ENCODE measurements at regions of chr15 and their contacts with region 1.

Region 1: DNA sequence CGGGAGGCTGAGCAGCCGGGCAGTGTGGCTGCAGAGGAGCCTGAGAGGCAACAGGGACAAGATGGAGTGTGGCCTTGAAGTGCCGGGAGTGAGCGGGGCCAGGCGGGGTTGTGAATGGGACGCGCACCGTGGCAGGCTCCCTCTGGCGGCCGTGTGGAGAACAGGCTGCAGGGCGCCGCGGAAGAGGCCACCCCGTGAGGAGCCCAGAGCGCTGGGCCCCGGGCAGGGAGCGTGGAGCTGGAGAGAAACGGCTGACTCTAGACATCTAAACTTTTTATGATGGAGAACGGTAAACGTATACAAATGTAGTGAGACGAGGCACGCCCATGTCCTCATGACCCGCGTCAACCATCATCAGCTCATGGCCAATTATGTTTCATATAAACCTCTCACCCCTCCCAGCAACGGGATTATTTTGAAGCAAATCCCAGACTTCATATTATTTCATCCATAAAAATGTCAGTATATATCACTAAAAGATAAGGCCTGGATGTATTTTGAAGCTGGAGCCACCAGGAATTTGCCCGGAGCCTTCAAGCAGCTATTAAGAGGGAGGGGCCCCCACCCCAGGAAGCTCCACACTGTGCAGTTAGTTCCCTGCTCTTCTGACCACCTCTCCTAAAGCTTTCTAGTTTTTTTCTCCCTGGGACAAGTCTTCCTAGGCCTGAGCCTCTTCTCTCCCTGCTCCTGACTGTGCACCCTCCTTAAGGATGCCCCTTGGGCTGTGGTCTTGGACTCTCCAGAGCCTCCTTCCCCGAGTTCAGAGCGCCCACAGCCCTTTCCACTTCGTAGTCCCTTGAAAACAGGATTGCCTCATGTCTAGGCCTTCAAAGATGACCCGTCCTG is 149.4 kb downstream of the SMAD6 start:
- DNase-seq: peak; percentile 86
- ATAC-seq: peak; percentile 86
- H3K4me3 Mint-ChIP-seq: no peak overlapping the region
- H3K27ac Mint-ChIP-seq: no peak overlapping the region
- H3K4me1 Mint-ChIP-seq: peaks cover 20% of the 10 kb centered on the region
- H3K27me3 Mint-ChIP-seq: peaks cover 16% of the 10 kb centered on the region
- CTCF ChIP-seq: peak; percentile 93

Region 2: GRCh38 chr15:66588537-66588936 is 262.9 kb before region 1 on chr15:
- CTCF ChIA-PET with region 1: interaction called, 15 read pairs
- POLR2A ChIA-PET with region 1: no interaction called
- DNase-seq: peak; percentile 80
- ATAC-seq: peak; percentile 91
- H3K4me3 Mint-ChIP-seq: peak overlapping the region; percentile 63
- H3K27ac Mint-ChIP-seq: no peak overlapping the region
- H3K4me1 Mint-ChIP-seq: peaks cover 23% of the 10 kb centered on the region
- H3K27me3 Mint-ChIP-seq: no peaks in the 10 kb centered on the region; the same call in 1 of the 2 replicates
- CTCF ChIP-seq: peak; percentile 69

Region 3: GRCh38 chr15:66679657-66680108 is 171.8 kb before region 1 on chr15:
- CTCF ChIA-PET with region 1: interaction called, 10 read pairs
- POLR2A ChIA-PET with region 1: no interaction called
- DNase-seq: peak; percentile 46
- ATAC-seq: peak; percentile 88
- H3K4me3 Mint-ChIP-seq: no peak overlapping the region
- H3K27ac Mint-ChIP-seq: peak overlapping the region; percentile 11; the same call in 1 of the 2 replicates
- H3K4me1 Mint-ChIP-seq: peaks cover 15% of the 10 kb centered on the region
- H3K27me3 Mint-ChIP-seq: no peaks in the 10 kb centered on the region
- CTCF ChIP-seq: no peak

Region 4: GRCh38 chr15:66747886-66748707 is 103.4 kb before region 1 on chr15:
- CTCF ChIA-PET with region 1: interaction called, 13 read pairs
- POLR2A ChIA-PET with region 1: interaction called, 6 read pairs
- DNase-seq: no peak
- ATAC-seq: no peak; the same call in 1 of the 2 replicates
- H3K4me3 Mint-ChIP-seq: peak overlapping the region; percentile 3; the same call in 1 of the 2 replicates
- H3K27ac Mint-ChIP-seq: peak overlapping the region; percentile 68
- H3K4me1 Mint-ChIP-seq: peaks cover 85% of the 10 kb centered on the region
- H3K27me3 Mint-ChIP-seq: no peaks in the 10 kb centered on the region
- CTCF ChIP-seq: no peak

Region 5: GRCh38 chr15:66789029-66790025 is 62.1 kb before region 1 on chr15:
- CTCF ChIA-PET with region 1: interaction called, 92 read pairs
- POLR2A ChIA-PET with region 1: no interaction called
- DNase-seq: peak; percentile 66
- ATAC-seq: peak; percentile 92
- H3K4me3 Mint-ChIP-seq: no peak overlapping the region
- H3K27ac Mint-ChIP-seq: no peak overlapping the region
- H3K4me1 Mint-ChIP-seq: peaks cover 8% of the 10 kb centered on the region; the same call in 1 of the 2 replicates
- H3K27me3 Mint-ChIP-seq: no peaks in the 10 kb centered on the region
- CTCF ChIP-seq: no peak

Region 6: DNA sequence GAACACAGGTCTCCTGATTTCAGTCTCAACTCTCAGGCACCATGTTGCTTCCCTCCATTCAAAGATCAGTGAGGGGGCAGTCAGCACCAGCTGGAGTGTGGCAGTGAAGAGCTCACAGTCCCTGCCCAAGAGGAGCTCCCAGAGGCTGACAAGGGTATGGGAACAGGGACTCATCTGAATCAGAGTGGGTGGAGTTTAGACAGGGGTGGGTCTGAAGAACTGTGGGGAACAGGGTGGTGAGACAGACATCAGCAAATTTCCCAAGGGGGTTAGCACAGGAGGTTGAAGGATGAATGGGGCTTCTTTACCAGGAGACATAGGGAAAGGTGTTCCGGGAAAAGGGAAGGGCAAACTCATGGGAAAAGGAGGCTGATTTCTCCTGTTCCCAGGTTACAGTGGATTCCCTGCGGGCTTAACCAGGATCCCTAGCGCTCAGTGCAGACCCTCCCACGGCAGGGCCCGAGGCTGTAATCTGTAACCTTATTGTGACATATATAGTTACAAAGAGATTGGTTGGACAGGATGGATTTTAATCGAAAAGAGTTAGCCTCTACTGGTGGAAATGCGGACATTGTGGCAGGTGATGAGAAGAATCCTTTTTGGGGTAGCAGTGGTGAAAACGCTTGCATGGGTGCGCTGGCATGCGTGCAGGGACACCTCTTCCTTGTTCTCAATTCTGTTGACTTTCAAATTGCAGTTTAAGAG is 10.8 kb after region 1 on chr15:
- CTCF ChIA-PET with region 1: interaction called, 14 read pairs
- POLR2A ChIA-PET with region 1: no interaction called
- DNase-seq: no peak
- ATAC-seq: peak; percentile 62
- H3K4me3 Mint-ChIP-seq: no peak overlapping the region
- H3K27ac Mint-ChIP-seq: peak overlapping the region; percentile 78; the same call in 1 of the 2 replicates
- H3K4me1 Mint-ChIP-seq: peaks cover 13% of the 10 kb centered on the region
- H3K27me3 Mint-ChIP-seq: no peaks in the 10 kb centered on the region
- CTCF ChIP-seq: no peak

Region 7: DNA sequence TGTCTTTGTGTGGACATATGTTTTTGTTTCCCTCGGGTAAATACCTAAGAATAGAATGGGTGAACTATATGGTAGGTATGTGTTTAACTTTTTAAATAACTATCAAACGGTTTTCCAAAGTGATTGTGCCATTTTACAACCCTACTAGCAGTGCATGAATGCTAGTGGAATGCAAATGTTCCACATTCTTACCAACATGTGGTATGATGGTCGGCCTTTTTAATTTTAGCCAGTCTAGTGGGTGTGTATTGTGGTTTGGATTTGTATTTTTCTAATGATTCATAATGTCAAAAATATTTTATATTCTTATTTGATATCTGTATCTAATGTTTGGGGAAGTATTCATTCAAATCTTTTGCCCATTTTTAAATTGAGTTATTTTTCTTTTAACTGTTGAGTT is 145.8 kb after region 1 on chr15:
- CTCF ChIA-PET with region 1: no interaction called
- POLR2A ChIA-PET with region 1: no interaction called
- DNase-seq: no peak
- ATAC-seq: no peak
- H3K4me3 Mint-ChIP-seq: no peak overlapping the region
- H3K27ac Mint-ChIP-seq: no peak overlapping the region
- H3K4me1 Mint-ChIP-seq: peaks cover 3% of the 10 kb centered on the region; the same call in 1 of the 2 replicates
- H3K27me3 Mint-ChIP-seq: no peaks in the 10 kb centered on the region
- CTCF ChIP-seq: no peak

Region 8: DNA sequence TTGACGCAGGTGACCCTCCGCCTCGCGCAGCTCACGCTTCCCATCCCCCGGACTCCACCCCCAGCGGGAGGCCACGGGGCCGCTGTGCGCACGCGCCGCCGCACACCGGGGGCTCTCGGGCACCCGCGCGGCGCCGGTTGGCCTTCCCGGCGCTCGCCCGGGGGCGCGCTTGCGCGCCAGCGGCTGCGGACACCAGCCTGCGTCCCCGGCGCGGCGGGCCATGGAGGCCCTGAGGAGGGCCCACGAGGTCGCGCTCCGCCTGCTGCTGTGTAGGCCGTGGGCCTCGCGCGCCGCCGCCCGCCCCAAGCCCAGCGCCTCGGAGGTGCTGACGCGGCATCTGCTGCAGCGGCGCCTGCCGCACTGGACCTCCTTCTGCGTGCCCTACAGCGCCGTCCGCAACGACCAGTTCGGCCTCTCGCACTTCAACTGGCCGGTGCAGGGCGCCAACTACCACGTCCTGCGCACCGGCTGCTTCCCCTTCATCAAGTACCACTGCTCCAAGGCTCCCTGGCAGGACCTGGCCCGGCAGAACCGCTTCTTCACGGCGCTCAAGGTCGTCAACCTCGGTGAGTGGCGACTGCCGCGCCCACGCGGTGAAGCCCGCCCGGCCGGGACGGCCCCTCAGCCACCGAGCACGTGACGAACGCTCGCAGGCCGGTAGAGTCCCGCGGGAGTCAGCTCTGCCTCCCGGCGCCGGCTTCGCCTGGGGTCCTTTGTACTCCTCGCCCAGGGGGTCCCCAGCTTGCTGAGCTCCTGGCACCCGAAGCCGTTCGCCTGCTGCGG is 669.8 kb after region 1 on chr15 and contains the start of gene C15orf61:
- CTCF ChIA-PET with region 1: no interaction called
- POLR2A ChIA-PET with region 1: no interaction called
- DNase-seq: peak; percentile 72
- ATAC-seq: peak; percentile 73
- H3K4me3 Mint-ChIP-seq: peak within 1 kb of the TSS; percentile 80
- H3K27ac Mint-ChIP-seq: 0 out of 2 replicates have a peak within 1 kb of the TSS, but pooled peaks have one; percentile 57
- H3K4me1 Mint-ChIP-seq: peaks cover 27% of the 10 kb centered on the region
- H3K27me3 Mint-ChIP-seq: peaks cover 16% of the 10 kb centered on the region
- CTCF ChIP-seq: no peak
- total RNA-seq, gene C15orf61: 2.6 to 3.3 TPM (median 2.9 TPM) in 3 replicates